Endothelial cell of umbilical vein (primary cell): ENCODE measurements at regions of chr4 and their contacts with region 1.

Region 1: DNA sequence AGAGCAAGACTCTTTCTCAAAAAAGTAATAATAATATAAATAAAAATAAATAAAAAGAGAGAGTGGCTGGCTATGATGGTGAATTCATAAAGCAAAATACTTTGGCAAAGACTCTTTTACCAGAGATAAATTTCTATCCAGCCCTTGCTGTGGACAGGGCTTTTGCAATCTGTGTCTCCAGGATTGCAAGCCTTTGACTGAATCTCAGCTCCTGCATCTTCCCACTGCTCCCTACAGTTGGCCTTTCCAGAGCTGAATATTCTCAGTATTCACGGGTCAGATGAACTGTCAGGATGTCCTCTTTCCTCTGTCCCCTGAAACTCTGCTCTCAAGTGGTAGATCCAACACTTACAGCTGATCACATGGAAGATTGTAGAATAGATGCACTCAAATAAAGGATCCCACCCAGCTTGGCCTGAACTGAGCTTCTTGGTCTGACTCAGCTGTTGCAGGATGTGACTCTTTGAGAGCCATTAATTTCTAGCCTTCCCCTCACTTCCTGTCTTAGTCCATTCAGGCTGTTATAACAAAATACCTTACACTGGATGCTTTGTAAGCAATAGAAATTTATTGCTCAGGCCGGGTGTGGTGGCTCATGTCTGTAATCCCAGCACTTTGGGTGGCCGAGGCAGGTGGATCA is 123.4 kb upstream of the GUCY1A1 start:
- DNase-seq: peak; percentile 95
- H3K4me3 ChIP-seq: no peak overlapping the region
- H3K27ac ChIP-seq: peak overlapping the region; percentile 39
- H3K4me1 ChIP-seq: peaks cover 9% of the 10 kb centered on the region
- H3K27me3 ChIP-seq: no peaks in the 10 kb centered on the region
- CTCF ChIP-seq: no peak
- POLR2A ChIP-seq: no peak

Region 2: DNA sequence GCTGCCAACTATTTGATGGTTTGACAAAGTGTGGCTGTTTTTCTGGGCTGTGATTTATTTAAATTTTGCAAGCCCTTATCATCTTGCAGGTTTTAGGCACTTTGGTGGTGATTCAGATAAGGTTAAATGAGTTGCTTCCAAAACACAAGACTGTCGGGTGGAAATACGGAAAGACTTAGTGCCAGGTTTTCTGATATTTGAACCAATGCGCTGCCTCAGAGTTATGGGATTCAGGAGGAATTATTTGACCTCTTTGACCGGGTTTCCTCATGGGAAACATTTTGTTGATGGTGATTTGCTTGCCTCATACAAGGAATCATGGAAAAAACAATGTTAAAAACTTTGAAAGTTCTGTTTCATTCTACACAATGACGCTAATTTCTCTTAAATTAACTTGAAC is 30.4 kb before region 1 on chr4:
- CTCF ChIA-PET with region 1: no interaction called
- POLR2A ChIA-PET with region 1: no interaction called
- dilution Hi-C with region 1: no loop called
- intact Hi-C with region 1: loop called (anchors 2 kb)
- DNase-seq: peak; percentile 98
- H3K4me3 ChIP-seq: no peak overlapping the region
- H3K27ac ChIP-seq: no peak overlapping the region
- H3K4me1 ChIP-seq: peaks cover 5% of the 10 kb centered on the region
- H3K27me3 ChIP-seq: no peaks in the 10 kb centered on the region
- CTCF ChIP-seq: no peak
- POLR2A ChIP-seq: no peak

Region 3: GRCh38 chr4:155629183-155629825 is 86.1 kb after region 1 on chr4:
- CTCF ChIA-PET with region 1: interaction called, 3 read pairs
- POLR2A ChIA-PET with region 1: no interaction called
- dilution Hi-C with region 1: no loop called
- intact Hi-C with region 1: loop called (anchors 5 kb)
- DNase-seq: peak; percentile 93
- H3K4me3 ChIP-seq: no peak overlapping the region
- H3K27ac ChIP-seq: peak overlapping the region; percentile 11
- H3K4me1 ChIP-seq: peaks cover 15% of the 10 kb centered on the region
- H3K27me3 ChIP-seq: no peaks in the 10 kb centered on the region
- CTCF ChIP-seq: no peak
- POLR2A ChIP-seq: no peak

Region 4: GRCh38 chr4:155667568-155668511 is 124.6 kb after region 1 on chr4:
- CTCF ChIA-PET with region 1: no interaction called
- POLR2A ChIA-PET with region 1: no interaction called
- dilution Hi-C with region 1: no loop called
- intact Hi-C with region 1: no loop called
- DNase-seq: peak; percentile 66
- H3K4me3 ChIP-seq: peak overlapping the region; percentile 39 to 83 (median 46)
- H3K27ac ChIP-seq: no peak overlapping the region
- H3K4me1 ChIP-seq: peaks cover 19% of the 10 kb centered on the region
- H3K27me3 ChIP-seq: peaks cover 12 to 16% of the 10 kb centered on the region in 2 experiments
- CTCF ChIP-seq: no peak
- POLR2A ChIP-seq: no peak